CD8-positive, alpha-beta T cell (primary cell): ENCODE measurements at regions of chr7 and their contacts with region 1.

Region 1: DNA sequence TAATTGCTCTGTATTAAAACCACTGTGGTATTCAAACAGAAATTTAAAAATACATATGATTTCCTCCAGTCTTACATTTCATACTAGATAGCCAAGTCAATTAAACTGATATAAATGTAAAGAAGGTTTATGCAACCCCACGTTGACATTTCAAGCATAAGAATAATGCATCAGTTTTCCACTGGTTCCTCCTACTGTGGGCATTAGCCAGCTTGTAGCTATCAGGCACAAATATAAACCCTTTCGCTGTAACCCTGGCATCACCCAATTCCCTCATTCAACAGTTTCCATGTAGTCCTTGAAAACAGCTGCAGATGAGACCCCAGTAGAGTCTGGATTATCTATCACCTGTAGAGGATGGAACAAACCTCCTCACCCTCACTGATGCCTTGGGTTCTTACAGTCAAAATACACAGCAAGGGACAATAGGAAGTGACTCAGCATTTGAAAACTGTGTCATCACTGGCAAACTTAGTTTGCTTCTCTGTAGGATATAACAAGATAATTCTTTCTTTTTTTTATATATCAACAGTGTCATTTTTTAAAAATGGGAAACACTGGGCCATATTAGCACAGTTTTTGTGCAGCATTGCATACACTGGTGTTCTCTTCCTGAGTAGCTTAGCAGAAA is 113.0 kb downstream of the PDE1C start:
- DNase-seq: no peak
- ATAC-seq: no peak
- H3K4me3 ChIP-seq: no peak overlapping the region
- H3K4me3 Mint-ChIP-seq: no peak overlapping the region
- H3K27ac ChIP-seq: no peak overlapping the region
- H3K27ac Mint-ChIP-seq: no peak overlapping the region
- H3K4me1 ChIP-seq: no peaks in the 10 kb centered on the region
- H3K4me1 Mint-ChIP-seq: no peaks in the 10 kb centered on the region
- H3K27me3 ChIP-seq: no peaks in the 10 kb centered on the region
- H3K27me3 Mint-ChIP-seq: no peaks in the 10 kb centered on the region
- CTCF ChIP-seq: no peak

Region 2: GRCh38 chr7:30556840-30557239 is 1400.4 kb before region 1 on chr7:
- CTCF ChIA-PET with region 1: no interaction called
- POLR2A ChIA-PET with region 1: no interaction called
- intact Hi-C with region 1: no loop called
- DNase-seq: no peak
- ATAC-seq: no peak
- H3K4me3 ChIP-seq: no peak overlapping the region
- H3K4me3 Mint-ChIP-seq: no peak overlapping the region
- H3K27ac ChIP-seq: no peak overlapping the region
- H3K27ac Mint-ChIP-seq: no peak overlapping the region
- H3K4me1 ChIP-seq: no peaks in the 10 kb centered on the region
- H3K4me1 Mint-ChIP-seq: no peaks in the 10 kb centered on the region
- H3K27me3 ChIP-seq: no peaks in the 10 kb centered on the region
- H3K27me3 Mint-ChIP-seq: no peaks in the 10 kb centered on the region
- CTCF ChIP-seq: no peak

Region 3: GRCh38 chr7:31917256-31917655 is 39.9 kb before region 1 on chr7:
- CTCF ChIA-PET with region 1: no interaction called
- POLR2A ChIA-PET with region 1: no interaction called
- intact Hi-C with region 1: loop called in 1 of 2 experiments (anchors 2 kb)
- DNase-seq: no peak
- ATAC-seq: no peak
- H3K4me3 ChIP-seq: no peak overlapping the region
- H3K4me3 Mint-ChIP-seq: no peak overlapping the region
- H3K27ac ChIP-seq: no peak overlapping the region
- H3K27ac Mint-ChIP-seq: no peak overlapping the region
- H3K4me1 ChIP-seq: no peaks in the 10 kb centered on the region
- H3K4me1 Mint-ChIP-seq: no peaks in the 10 kb centered on the region
- H3K27me3 ChIP-seq: no peaks in the 10 kb centered on the region
- H3K27me3 Mint-ChIP-seq: no peaks in the 10 kb centered on the region
- CTCF ChIP-seq: no peak

Region 4: DNA sequence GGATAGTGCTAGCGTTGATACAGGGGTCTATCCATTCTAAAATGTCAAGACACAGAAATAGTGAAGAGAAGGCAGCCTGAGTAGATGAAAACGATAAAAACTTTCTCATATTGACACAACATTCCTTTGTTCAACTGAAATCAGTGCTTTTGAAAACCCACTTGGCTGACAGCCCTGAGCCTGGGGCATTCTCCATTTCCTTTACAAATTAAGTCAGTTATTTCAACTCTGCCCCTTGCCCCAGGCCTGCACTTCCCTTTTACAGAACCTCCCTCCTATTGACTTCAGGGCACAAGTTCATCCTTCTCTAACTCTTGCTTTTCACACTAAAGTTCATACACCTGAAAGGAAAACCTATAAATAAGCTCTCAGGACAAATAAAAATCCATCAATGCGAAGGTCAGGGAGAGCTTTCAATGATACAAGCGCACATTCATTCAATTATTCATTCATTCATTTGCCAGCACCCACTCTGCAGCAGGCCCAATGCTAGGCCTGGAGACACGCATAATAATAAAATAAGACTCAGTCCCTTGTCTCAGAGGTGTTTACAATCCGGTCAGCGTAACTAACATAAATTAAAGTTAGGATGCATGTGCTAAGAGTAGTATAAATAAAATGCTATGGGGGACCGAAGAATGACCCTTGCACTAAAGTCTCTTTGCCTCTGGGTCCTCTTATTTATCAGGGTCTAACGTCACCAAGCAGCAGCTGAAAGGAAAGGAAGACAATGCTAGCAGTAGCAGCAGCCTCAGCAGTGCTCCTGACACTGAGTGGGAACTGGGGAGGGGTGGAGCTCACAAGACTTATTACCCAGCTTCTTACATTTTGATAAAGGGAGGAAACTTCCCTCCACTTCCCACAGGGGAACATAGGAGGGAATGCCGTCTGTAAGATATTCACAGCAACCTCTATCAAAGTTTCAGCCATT is 21.8 kb before region 1 on chr7:
- CTCF ChIA-PET with region 1: no interaction called
- POLR2A ChIA-PET with region 1: no interaction called
- intact Hi-C with region 1: no loop called
- DNase-seq: no peak
- ATAC-seq: no peak
- H3K4me3 ChIP-seq: no peak overlapping the region
- H3K4me3 Mint-ChIP-seq: no peak overlapping the region
- H3K27ac ChIP-seq: no peak overlapping the region
- H3K27ac Mint-ChIP-seq: no peak overlapping the region
- H3K4me1 ChIP-seq: no peaks in the 10 kb centered on the region
- H3K4me1 Mint-ChIP-seq: no peaks in the 10 kb centered on the region
- H3K27me3 ChIP-seq: no peaks in the 10 kb centered on the region
- H3K27me3 Mint-ChIP-seq: no peaks in the 10 kb centered on the region
- CTCF ChIP-seq: no peak

Region 5: DNA sequence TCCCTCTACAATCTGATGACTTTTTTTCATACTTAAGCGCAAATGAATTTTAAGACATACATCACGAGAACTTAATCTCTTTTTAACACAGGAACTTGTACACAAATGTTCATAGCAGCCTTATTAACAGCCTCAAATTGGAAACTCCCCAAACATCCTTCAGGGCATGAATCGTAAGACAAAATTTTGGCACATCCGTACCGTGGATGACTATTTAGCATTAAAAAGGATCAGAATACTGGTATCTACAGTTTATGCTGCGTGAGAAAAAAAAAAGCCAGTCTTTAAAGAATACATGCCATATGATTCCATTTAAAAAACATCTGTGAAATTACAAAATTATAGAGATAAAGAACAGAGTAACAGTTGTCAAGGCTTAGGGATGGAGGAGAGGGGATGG is 66.2 kb after region 1 on chr7:
- CTCF ChIA-PET with region 1: no interaction called
- POLR2A ChIA-PET with region 1: no interaction called
- intact Hi-C with region 1: no loop called
- DNase-seq: no peak
- ATAC-seq: no peak
- H3K4me3 ChIP-seq: no peak overlapping the region
- H3K4me3 Mint-ChIP-seq: no peak overlapping the region
- H3K27ac ChIP-seq: no peak overlapping the region
- H3K27ac Mint-ChIP-seq: no peak overlapping the region
- H3K4me1 ChIP-seq: no peaks in the 10 kb centered on the region
- H3K4me1 Mint-ChIP-seq: no peaks in the 10 kb centered on the region
- H3K27me3 ChIP-seq: no peaks in the 10 kb centered on the region
- H3K27me3 Mint-ChIP-seq: no peaks in the 10 kb centered on the region
- CTCF ChIP-seq: no peak